ENCODE measurements at regions of chr3 and their contacts with region 1.

Region 1: GRCh38 chr3:38521391-38521987 is 25.3 kb downstream of the EXOG start:
- DNase-seq: peak; percentile 64
- H3K4me3 Mint-ChIP-seq: no peak overlapping the region
- H3K27ac Mint-ChIP-seq: no peak overlapping the region
- H3K4me1 Mint-ChIP-seq: no peaks in the 10 kb centered on the region
- H3K27me3 Mint-ChIP-seq: no peaks in the 10 kb centered on the region
- CTCF ChIP-seq: peak; percentile 49

Region 2: DNA sequence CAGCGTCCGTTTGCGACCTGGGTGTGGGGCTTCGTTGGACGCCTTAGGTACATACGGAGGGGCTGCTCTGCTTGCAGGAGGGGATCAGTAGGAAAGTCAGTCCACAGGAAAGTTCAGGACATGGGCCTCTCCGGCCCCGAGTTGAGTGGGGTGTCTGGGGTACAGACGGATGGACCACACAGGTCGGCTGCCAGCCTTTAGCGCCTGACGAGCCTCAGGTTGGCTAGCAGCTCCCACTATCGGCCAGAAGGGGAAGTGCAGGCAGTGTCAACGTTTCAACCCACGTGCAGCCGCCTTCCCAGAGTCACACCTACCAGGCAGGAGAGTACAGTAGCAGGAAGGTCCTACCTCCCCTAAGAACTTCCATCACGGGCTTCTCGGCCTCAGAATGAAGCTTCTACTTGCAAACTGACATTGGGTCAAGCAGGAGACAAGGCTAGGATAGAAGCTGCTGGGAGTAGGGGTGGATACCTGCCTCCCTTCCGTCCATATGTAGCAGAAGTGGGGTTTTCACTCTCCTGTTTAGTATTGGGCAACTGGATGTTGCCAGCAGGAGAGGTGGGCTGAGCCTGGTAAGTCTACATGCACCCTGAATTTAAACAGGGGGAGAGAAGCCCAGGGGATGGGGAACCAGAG is 129.8 kb after region 1 on chr3:
- CTCF ChIA-PET with region 1: interaction called, 21 read pairs
- intact Hi-C with region 1: loop called (anchors 1 kb)
- DNase-seq: peak; percentile 66
- H3K4me3 Mint-ChIP-seq: no peak overlapping the region
- H3K27ac Mint-ChIP-seq: no peak overlapping the region
- H3K4me1 Mint-ChIP-seq: no peaks in the 10 kb centered on the region
- H3K27me3 Mint-ChIP-seq: peaks cover 41% of the 10 kb centered on the region
- CTCF ChIP-seq: peak; percentile 84

Region 3: DNA sequence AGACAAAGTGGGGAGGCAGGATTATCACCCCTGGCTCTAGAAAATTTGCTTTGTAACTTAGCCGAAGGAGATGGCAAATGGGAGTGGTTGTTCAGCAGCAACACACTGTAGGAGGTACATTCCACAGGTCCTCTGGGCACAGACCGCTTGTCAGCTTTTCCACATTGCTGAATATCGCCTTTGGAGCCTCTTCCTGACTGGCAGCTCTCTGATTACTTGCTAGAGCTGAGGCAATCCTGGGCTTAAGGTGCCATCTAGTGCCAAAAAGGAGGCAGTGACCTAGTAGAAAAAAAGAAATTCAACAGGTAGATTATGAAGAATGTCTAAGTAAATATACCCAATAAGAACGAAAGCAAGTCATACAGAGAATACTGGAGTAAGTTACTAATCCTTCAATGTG is 141.1 kb after region 1 on chr3:
- CTCF ChIA-PET with region 1: interaction called, 21 read pairs
- intact Hi-C with region 1: loop called (anchors 1 kb)
- DNase-seq: peak; percentile 30
- H3K4me3 Mint-ChIP-seq: no peak overlapping the region
- H3K27ac Mint-ChIP-seq: no peak overlapping the region
- H3K4me1 Mint-ChIP-seq: no peaks in the 10 kb centered on the region
- H3K27me3 Mint-ChIP-seq: peaks cover 59% of the 10 kb centered on the region
- CTCF ChIP-seq: no peak

Region 4: GRCh38 chr3:38843898-38844297 is 322.4 kb after region 1 on chr3:
- CTCF ChIA-PET with region 1: interaction called, 6 read pairs
- intact Hi-C with region 1: loop called (anchors 5 kb)
- DNase-seq: peak; percentile 37
- H3K4me3 Mint-ChIP-seq: no peak overlapping the region
- H3K27ac Mint-ChIP-seq: no peak overlapping the region
- H3K4me1 Mint-ChIP-seq: no peaks in the 10 kb centered on the region
- H3K27me3 Mint-ChIP-seq: peaks cover 43% of the 10 kb centered on the region
- CTCF ChIP-seq: peak; percentile 23